Heart right ventricle (tissue), 16 donors: ENCODE measurements at regions of chr6 and their contacts with region 1.

Region 1: DNA sequence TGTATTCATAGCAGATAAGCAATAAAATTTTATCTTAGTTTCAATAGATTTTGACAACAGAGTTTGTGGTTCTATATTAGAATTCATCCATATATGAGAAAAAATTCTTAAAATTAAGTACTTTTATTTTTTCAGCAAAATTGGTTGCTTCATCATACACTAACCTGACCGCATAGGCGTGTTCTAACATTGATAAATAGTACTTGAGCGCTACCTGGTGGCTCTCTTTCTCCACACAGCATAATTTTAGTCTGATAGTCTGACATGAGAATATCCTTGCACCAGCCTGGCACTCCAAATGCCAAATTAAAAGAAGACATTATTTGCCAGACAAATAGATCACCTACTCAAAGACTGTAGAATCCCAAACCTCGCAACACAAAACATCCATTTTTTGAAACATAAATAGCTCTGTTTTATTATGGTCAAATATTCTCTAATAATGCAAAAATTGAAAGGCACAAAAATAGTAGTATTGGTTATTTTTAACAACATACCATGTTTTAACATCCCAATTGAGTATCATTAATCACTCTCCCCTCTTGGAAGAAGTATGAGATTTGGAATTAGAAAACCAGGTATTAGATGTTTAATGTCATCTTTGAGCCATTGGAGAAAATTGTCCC is 33.0 kb upstream of the FILIP1 start:
- DNase-seq: peak in 1 of 2 donors; percentile 75
- ATAC-seq: peak; percentile 68 to 92 (median 88)
- H3K4me3 ChIP-seq: no peak overlapping the region
- H3K27ac ChIP-seq: no peak overlapping the region
- H3K4me1 ChIP-seq: peaks cover 0 to 9% (median 0%) of the 10 kb centered on the region in 9 donors
- H3K27me3 ChIP-seq: no peaks in the 10 kb centered on the region
- CTCF ChIP-seq: peak; percentile 39 to 86 (median 79)

Region 2: DNA sequence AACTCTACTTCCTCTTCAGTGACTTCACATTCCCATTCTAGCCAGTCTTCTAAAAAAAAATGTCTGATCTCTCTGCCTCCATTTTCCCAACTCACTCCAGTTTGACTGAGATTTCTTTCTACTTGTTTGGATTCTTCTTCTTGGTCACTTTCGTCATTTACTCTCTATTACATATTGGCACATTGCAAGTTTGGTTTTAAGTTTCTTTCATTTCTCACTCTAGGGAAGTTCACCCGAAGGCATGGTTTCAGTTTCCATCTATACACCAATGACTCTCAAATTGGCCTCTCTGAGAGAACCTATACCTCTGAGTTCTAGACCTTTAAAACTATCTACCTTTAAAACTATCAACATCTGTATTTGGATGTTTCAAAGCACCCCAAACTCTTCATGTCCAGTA is 1779.3 kb before region 1 on chr6:
- intact Hi-C with region 1: loop called in 1 of 10 experiments (anchors 10 kb)
- DNase-seq: no peak
- ATAC-seq: no peak
- H3K4me3 ChIP-seq: peak overlapping the region in 1 of 10 donors; percentile 6
- H3K27ac ChIP-seq: peak overlapping the region in 1 of 10 donors; percentile 65
- H3K4me1 ChIP-seq: peaks cover 0 to 11% (median 0%) of the 10 kb centered on the region in 9 donors
- H3K27me3 ChIP-seq: no peaks in the 10 kb centered on the region
- CTCF ChIP-seq: no peak

Region 3: DNA sequence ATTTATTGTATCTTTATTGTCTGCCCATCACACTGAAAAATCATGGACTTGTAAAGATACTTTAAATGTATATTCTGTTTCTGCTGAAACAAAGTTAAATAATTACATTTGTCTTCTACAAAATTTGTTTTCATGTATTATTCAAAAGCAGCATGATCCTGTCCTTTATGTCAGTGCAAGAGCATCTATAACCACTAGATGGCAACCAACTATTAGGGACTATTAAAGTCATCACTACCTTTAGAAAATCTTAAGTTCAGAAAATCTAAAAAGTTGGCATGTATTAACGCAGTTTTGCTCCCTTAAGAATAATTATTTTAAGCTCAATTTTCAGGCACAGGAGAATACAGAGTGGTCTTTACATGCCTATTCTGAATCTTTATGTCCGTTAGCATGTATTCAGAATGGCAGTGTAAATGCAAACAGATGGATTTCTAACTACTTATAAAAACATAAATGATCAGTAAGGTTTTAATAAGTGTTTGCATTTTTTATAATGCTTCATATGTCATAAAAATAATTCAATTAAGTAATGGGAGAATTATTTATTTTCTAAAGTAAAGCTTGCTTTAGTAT is 259.8 kb before region 1 on chr6:
- intact Hi-C with region 1: loop called (anchors 1 to 5 kb)
- DNase-seq: no peak
- ATAC-seq: peak in 7 of 8 donors; percentile 66 to 80 (median 70)
- H3K4me3 ChIP-seq: no peak overlapping the region
- H3K27ac ChIP-seq: no peak overlapping the region
- H3K4me1 ChIP-seq: peaks cover 3 to 39% (median 25%) of the 10 kb centered on the region in 9 donors
- H3K27me3 ChIP-seq: no peaks in the 10 kb centered on the region
- CTCF ChIP-seq: peak; percentile 73 to 92 (median 84)

Region 4: GRCh38 chr6:75275067-75275466 is 251.5 kb before region 1 on chr6:
- intact Hi-C with region 1: loop called in 1 of 10 experiments (anchors 5 kb)
- DNase-seq: no peak
- ATAC-seq: no peak
- H3K4me3 ChIP-seq: no peak overlapping the region
- H3K27ac ChIP-seq: peak overlapping the region in 1 of 10 donors; percentile 1
- H3K4me1 ChIP-seq: peaks cover 0 to 94% (median 41%) of the 10 kb centered on the region in 9 donors
- H3K27me3 ChIP-seq: no peaks in the 10 kb centered on the region
- CTCF ChIP-seq: no peak

Region 5: GRCh38 chr6:75284632-75285286 is 241.9 kb before region 1 on chr6 and contains the start of gene TMEM30A:
- intact Hi-C with region 1: loop called in 1 of 10 experiments (anchors 5 kb)
- DNase-seq: peak; percentile 95 to 98
- ATAC-seq: peak; percentile 99 to 100 (median 100)
- H3K4me3 ChIP-seq: peak within 1 kb of the TSS; percentile 80 to 96 (median 90)
- H3K27ac ChIP-seq: peak within 1 kb of the TSS; percentile 68 to 95 (median 92)
- H3K4me1 ChIP-seq: peaks cover 0 to 62% (median 46%) of the 10 kb centered on the region in 9 donors
- H3K27me3 ChIP-seq: no peaks in the 10 kb centered on the region
- CTCF ChIP-seq: peak in 3 of 9 donors; percentile 10 to 16 (median 13)
- total RNA-seq, gene TMEM30A: 42.6 to 68.0 (median 55.9) TPM

Region 6: DNA sequence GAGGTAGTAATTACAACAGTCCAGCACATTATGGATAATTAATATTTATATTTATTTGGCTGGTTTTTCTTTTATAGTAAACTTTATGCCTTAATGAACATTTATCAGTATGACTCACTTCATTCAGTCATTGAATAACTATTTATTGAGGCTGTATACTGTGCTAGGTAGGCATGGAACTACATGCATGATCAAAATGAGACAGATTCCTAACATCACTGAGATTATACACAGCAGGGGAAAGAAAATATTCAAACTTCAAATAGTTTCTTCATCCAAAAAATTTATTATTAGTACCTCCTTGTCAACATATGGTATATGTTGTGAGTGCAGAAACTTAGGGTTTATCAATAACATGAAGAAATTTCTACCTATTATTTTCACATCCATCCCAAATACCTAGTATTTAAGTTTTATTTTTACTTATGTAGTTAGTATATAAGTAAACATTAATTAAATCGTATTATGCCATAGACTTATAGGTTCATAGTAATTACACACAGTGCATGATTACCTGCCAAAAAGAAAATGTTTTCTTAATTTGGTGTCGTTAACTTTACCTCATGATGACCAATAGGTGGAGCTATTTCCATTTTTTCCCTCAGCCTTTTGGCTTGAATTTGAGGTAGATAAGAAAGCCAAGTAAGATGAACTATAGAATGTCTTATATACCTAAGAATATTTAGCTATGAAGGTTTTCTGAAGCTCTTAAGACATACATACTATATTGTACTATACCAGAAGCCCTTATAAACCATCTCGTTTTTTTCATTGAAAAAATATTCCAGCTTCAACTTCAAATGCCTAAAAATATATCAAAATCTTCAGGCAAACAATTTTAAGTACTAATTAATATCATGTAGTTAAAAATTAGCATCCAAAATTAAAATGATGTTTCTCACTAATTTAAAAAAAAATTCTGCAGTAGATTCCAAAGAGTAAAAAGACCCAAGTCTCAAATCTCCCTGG is 229.5 kb before region 1 on chr6:
- intact Hi-C with region 1: loop called in 6 of 10 experiments (anchors 1 to 5 kb)
- DNase-seq: no peak
- ATAC-seq: peak in 7 of 8 donors; percentile 20 to 59 (median 39)
- H3K4me3 ChIP-seq: no peak overlapping the region
- H3K27ac ChIP-seq: no peak overlapping the region
- H3K4me1 ChIP-seq: peaks cover 0 to 32% (median 24%) of the 10 kb centered on the region in 9 donors
- H3K27me3 ChIP-seq: no peaks in the 10 kb centered on the region
- CTCF ChIP-seq: peak; percentile 60 to 86 (median 76)